T-cell (primary cell): ENCODE measurements at regions of chr3 and their contacts with region 1.

Region 1: DNA sequence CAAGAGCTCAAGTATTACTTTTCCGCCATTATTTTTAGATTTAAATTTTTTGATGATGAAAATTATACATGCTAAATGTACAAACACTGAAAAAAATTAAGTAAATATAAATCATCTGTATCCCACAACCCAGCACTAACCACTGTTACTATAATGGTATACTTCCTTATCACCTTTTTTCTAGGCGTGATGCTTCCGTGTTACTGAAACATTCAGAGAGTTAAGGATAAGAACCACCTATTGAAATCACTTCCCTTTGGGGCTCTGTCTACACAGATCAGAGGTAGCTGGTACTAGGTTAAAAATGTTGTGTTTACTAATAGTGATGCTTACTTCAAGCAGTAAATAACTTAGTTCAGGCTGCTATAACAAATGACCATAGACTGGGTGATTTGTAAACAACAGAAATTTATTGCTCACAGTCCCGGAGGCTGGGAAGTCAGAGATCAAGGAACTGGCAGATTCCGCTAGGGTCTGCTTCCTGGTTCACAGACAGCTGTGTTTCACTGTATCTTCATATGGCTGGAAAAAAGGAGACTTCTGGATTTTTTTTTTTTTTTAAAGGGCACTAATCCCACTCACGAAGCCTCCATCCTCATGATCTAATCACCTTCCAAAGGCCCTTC is 6.4 kb downstream of the SNX4 start:
- DNase-seq: no peak
- ATAC-seq: no peak
- H3K4me3 ChIP-seq: no peak overlapping the region
- H3K4me3 Mint-ChIP-seq: no peak overlapping the region
- H3K27ac ChIP-seq: no peak overlapping the region
- H3K27ac Mint-ChIP-seq: no peak overlapping the region
- H3K4me1 ChIP-seq: peaks cover 0 to 9% of the 10 kb centered on the region in 2 experiments
- H3K4me1 Mint-ChIP-seq: peaks cover 38 to 54% (median 53%) of the 10 kb centered on the region in 3 donors
- H3K27me3 ChIP-seq: no peaks in the 10 kb centered on the region
- H3K27me3 Mint-ChIP-seq: no peaks in the 10 kb centered on the region

Region 2: DNA sequence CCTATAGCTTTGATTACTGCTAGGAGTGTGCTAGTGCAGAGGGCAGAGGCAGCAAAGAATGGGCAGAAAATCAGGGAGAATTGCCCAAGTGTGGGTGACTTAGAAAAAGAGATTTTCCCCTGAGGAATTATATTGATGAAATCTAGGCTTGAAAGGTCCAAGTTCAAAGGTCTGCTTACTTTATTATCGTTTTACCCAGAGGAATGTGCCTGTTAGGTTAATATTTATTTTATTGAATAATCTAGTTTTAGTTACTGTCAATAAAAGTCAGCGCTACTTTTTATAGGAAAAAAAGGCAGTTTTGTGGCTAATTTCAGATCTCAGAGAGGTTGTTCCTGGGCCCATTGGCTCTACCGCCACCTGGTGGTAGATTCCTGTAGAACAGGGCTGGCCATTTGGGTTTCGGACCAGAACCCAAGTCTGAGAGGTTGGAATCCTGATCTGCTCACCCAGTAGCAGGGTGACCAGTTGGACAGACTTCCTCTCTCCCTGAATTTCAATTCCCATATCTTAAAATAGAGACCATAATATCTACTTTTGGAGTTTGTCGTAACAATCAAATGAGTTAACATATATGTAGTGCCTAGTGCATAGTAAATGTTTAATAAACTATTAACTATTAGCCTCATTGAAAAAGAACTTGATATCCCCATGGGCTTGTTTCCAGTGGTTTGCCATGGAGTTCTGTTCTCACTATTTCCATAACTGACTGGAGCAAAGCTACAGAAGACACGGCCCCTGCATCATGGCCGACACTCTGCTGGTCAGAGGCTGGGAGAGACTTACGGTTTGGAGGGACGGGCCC is 75.8 kb before region 1 on chr3:
- CTCF ChIA-PET with region 1: no interaction called
- POLR2A ChIA-PET with region 1: no interaction called
- DNase-seq: peak; percentile 5 to 78 (median 51)
- ATAC-seq: peak in 1 of 4 experiments; percentile 42
- H3K4me3 ChIP-seq: no peak overlapping the region
- H3K4me3 Mint-ChIP-seq: no peak overlapping the region
- H3K27ac ChIP-seq: no peak overlapping the region
- H3K27ac Mint-ChIP-seq: no peak overlapping the region
- H3K4me1 ChIP-seq: no peaks in the 10 kb centered on the region
- H3K4me1 Mint-ChIP-seq: peaks cover 0 to 2% (median 0%) of the 10 kb centered on the region in 3 donors
- H3K27me3 ChIP-seq: no peaks in the 10 kb centered on the region
- H3K27me3 Mint-ChIP-seq: no peaks in the 10 kb centered on the region

Region 3: DNA sequence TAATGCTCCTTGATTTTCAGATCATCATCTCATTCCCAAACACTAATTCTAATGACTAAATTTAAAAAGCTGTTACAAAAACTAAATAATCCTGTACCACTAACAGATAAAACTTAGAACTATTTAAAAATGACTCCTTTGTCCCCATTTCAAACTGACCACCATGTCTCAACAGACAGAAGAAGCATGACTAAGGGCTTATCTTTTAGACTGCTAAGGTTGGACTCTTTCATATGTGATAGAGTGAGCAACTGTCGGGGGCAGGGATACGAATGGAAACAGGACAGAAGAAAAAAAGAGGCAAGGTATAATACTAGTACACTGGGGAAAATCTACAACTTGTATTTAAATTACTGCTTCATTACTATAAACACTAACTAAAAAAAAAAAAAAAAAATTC is 16.9 kb before region 1 on chr3:
- CTCF ChIA-PET with region 1: no interaction called
- POLR2A ChIA-PET with region 1: interaction called in 1 of 2 experiments, 12 read pairs
- DNase-seq: no peak
- ATAC-seq: no peak
- H3K4me3 ChIP-seq: no peak overlapping the region
- H3K4me3 Mint-ChIP-seq: no peak overlapping the region
- H3K27ac ChIP-seq: no peak overlapping the region
- H3K27ac Mint-ChIP-seq: no peak overlapping the region
- H3K4me1 ChIP-seq: no peaks in the 10 kb centered on the region
- H3K4me1 Mint-ChIP-seq: no peaks in the 10 kb centered on the region
- H3K27me3 ChIP-seq: no peaks in the 10 kb centered on the region
- H3K27me3 Mint-ChIP-seq: no peaks in the 10 kb centered on the region